Activated CD4-positive, alpha-beta T cell treated with anti-CD3 and anti-CD28 coated beads, Interleukin-2, amount 10 ng/mL, durations not matched to agents 24 days and 14 days (primary cell): ENCODE measurements at regions of chr10 and their contacts with region 1.

Region 1: DNA sequence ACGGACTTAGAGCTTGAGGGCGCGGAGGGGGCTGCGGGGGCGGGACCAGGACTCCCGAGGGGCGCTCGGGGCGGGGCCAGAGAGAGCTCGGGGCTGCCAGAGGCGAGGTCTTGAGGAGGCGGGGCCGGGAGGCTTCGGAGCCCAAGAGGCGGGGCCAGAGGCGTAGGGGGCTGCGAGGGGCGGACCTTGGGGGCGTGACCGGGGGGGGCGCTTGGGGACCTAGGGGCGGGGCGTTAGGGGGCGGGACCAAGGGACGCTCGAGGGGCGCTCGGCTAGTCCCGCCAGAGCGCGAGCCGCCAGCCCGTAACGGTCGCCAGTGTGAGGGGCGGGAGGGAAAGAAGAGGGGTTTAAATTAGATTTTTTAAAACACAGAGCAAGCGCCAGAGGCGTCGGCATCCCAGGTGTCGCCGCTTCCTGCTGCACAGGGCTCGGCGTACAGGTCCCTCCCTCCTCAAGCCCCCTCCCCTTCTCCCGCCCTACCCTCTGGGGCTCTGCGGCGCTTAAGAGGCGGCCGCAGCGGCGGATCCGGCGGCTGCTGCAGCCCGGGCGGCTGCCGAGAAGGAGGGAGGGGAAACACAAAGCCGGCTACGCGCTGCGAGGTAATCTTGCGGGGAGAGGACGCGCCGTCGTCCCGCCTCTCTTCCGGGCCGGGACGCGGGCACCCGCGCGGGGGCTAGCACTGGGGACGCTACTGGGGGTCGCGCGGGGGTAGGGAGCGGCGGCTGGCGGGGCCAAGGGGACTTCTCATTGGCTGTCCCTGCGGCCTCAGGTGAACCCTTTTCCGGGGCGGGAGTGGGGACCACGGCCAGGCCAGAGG is at the start of gene ADD3:
- DNase-seq: peak; percentile 95
- H3K4me3 Mint-ChIP-seq: no peak within 1 kb of the TSS
- H3K27ac Mint-ChIP-seq: peak within 1 kb of the TSS; percentile 94
- H3K4me1 Mint-ChIP-seq: peaks cover 40% of the 10 kb centered on the region
- H3K27me3 Mint-ChIP-seq: peaks cover 4% of the 10 kb centered on the region
- total RNA-seq, gene ADD3: 28.4 and 28.9 TPM in 2 replicates

Region 2: DNA sequence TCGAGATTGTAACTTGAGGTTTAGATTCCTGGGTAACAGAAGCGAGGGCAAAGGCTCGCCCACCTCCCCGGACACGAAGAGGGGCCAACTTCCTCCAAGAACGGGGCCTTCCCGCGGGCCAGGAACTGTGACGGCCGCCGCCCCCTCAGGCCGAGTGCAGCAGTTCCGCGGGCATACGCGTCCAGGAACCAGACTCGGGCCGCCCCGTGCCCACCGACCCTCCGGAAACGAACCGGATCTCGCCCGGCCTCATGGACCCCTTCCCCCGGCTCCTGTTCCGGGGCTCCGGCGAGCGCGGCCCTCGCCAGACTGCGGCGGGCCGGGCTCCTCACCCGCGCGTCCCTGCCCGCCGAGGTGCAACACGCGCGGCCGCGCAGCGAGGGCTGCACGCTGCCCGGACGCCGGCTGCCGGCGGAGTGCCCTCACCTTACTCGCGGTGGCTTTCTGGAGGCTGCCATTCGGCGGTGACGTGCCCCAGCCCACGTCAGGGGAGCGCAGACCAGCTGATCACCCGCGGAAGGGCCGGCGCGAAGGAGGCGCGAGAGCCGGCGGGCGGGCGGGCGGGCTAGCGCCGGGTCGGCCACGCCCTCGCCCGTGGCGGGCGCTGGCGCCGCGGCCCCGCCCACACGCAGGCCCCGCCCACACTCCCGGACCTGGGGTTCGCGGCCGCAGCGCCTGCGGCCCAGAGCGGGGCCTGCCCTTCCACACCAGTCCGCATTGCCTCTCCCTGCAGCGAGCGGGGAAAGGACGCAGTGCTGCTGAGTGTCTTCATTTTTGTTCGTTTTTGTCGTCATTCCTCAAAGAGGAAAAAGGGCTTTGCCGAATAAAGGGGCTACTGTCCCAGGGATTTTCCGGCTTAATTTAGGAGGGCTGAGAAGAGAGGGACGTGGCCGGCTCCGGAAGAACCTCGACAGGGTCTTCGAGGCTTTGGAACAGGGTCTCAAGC is 84.7 kb before region 1 on chr10 and contains the start of gene XPNPEP1:
- intact Hi-C with region 1: loop called (anchors 1 kb)
- DNase-seq: peak; percentile 95
- H3K4me3 Mint-ChIP-seq: peak within 1 kb of the TSS; percentile 95
- H3K27ac Mint-ChIP-seq: peak within 1 kb of the TSS; percentile 93
- H3K4me1 Mint-ChIP-seq: peaks cover 49% of the 10 kb centered on the region
- H3K27me3 Mint-ChIP-seq: peaks cover 4% of the 10 kb centered on the region
- total RNA-seq, gene XPNPEP1: 98.9 and 105 TPM in 2 replicates

Region 3: GRCh38 chr10:109996225-109996624 is 11.7 kb before region 1 on chr10:
- intact Hi-C with region 1: loop called (anchors 1 kb)
- DNase-seq: no peak
- H3K4me3 Mint-ChIP-seq: no peak overlapping the region
- H3K27ac Mint-ChIP-seq: no peak overlapping the region
- H3K4me1 Mint-ChIP-seq: peaks cover 7% of the 10 kb centered on the region
- H3K27me3 Mint-ChIP-seq: peaks cover 4% of the 10 kb centered on the region

Region 4: GRCh38 chr10:110067960-110068770 is 60.3 kb after region 1 on chr10:
- intact Hi-C with region 1: loop called (anchors 1 kb)
- DNase-seq: peak; percentile 92
- H3K4me3 Mint-ChIP-seq: peak overlapping the region; percentile 72
- H3K27ac Mint-ChIP-seq: peak overlapping the region; percentile 90
- H3K4me1 Mint-ChIP-seq: peaks cover 72% of the 10 kb centered on the region
- H3K27me3 Mint-ChIP-seq: no peaks in the 10 kb centered on the region

Region 5: DNA sequence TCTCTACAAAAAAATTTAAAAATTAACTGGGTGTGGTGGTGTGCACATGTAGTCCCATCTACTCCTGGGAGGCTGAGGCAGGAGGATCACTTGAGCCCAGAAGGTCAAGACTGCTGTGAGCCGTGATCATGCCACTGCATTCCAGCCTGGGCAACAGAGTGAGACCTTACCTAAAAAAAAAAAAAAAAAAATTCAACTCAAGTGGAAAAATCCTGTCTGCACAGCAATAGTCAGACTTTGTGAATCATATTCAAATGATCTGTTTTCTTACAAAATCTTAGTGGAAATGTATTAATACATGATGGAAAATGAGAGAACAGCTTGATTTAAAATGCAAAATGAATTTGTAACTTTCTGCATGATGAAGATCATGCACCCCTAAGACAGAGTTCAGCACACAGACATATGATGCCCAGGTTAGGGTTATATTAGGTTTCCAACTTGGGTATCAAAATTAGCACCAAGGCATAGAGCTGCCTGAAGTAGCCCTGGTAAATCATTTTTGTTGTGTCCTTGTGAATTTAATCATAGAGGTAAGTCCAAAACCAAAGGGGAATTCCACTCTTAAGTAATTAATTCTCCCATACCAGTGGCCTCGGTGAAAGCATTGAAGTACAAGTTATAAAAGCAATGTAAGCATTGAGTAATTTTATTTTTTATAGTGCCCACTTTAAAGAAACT is 93.7 kb after region 1 on chr10:
- intact Hi-C with region 1: loop called (anchors 2 kb)
- DNase-seq: no peak
- H3K4me3 Mint-ChIP-seq: peak overlapping the region; percentile 44
- H3K27ac Mint-ChIP-seq: peak overlapping the region; percentile 88
- H3K4me1 Mint-ChIP-seq: peaks cover 31% of the 10 kb centered on the region
- H3K27me3 Mint-ChIP-seq: no peaks in the 10 kb centered on the region

Region 6: DNA sequence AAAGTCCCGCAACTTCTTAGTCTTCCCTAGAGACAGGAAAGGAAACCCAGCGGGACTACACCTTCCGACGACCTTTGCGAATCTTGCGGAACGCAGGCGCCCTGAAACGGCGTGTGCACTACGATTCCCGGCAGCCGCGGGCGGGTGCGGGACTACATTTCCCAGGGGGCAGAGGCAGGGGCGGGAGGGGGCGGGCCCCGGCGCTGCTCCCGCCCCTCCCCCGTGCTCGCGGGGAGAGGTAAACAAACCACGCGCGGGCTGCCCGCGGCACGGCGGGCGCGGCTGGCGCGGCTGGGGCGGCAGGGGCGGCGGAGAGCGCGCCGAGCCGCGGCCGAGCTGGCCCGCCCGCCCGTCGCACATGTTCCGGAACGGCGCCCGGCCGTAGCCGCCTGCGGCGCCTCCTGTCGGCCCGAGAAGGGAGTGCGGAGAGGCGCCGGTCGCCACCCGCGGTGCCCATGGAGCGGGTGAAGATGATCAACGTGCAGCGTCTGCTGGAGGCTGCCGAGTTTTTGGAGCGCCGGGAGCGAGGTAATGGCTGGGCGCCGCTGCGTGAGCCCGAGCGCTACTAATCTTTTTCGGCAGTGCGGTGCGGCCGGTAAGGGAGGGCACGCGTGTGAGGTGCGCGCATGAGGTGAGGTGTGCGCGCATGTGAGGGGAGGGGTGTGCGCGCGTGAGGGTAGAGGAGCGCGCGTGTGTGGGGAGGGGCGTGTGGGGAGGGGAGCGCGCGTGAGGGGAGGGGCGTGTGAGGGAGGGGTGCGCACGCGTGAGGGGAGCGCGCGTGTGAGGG is 218.0 kb after region 1 on chr10:
- intact Hi-C with region 1: loop called (anchors 2 kb)
- DNase-seq: peak; percentile 95
- H3K4me3 Mint-ChIP-seq: peak overlapping the region; percentile 99
- H3K27ac Mint-ChIP-seq: peak overlapping the region; percentile 99
- H3K4me1 Mint-ChIP-seq: peaks cover 45% of the 10 kb centered on the region
- H3K27me3 Mint-ChIP-seq: peaks cover 3% of the 10 kb centered on the region